CD4-positive, alpha-beta T cell (primary cell): ENCODE measurements at regions of chr9 and their contacts with region 1.

Region 1: GRCh38 chr9:29793970-29794369 is 2220.7 kb upstream of the C9orf72 start:
- DNase-seq: no peak
- ATAC-seq: no peak
- H3K4me3 ChIP-seq: no peak overlapping the region
- H3K4me3 Mint-ChIP-seq: no peak overlapping the region
- H3K27ac ChIP-seq: no peak overlapping the region
- H3K27ac Mint-ChIP-seq: no peak overlapping the region
- H3K4me1 ChIP-seq: no peaks in the 10 kb centered on the region
- H3K4me1 Mint-ChIP-seq: no peaks in the 10 kb centered on the region
- H3K27me3 ChIP-seq: no peaks in the 10 kb centered on the region
- H3K27me3 Mint-ChIP-seq: no peaks in the 10 kb centered on the region
- CTCF ChIP-seq: no peak

Region 2: GRCh38 chr9:29730163-29730562 is 63.8 kb before region 1 on chr9:
- CTCF ChIA-PET with region 1: no interaction called
- POLR2A ChIA-PET with region 1: no interaction called
- intact Hi-C with region 1: loop called in 1 of 2 experiments (anchors 10 kb)
- DNase-seq: no peak
- ATAC-seq: no peak
- H3K4me3 ChIP-seq: no peak overlapping the region
- H3K4me3 Mint-ChIP-seq: no peak overlapping the region
- H3K27ac ChIP-seq: no peak overlapping the region
- H3K27ac Mint-ChIP-seq: no peak overlapping the region
- H3K4me1 ChIP-seq: no peaks in the 10 kb centered on the region
- H3K4me1 Mint-ChIP-seq: no peaks in the 10 kb centered on the region
- H3K27me3 ChIP-seq: no peaks in the 10 kb centered on the region
- H3K27me3 Mint-ChIP-seq: no peaks in the 10 kb centered on the region
- CTCF ChIP-seq: no peak

Region 3: DNA sequence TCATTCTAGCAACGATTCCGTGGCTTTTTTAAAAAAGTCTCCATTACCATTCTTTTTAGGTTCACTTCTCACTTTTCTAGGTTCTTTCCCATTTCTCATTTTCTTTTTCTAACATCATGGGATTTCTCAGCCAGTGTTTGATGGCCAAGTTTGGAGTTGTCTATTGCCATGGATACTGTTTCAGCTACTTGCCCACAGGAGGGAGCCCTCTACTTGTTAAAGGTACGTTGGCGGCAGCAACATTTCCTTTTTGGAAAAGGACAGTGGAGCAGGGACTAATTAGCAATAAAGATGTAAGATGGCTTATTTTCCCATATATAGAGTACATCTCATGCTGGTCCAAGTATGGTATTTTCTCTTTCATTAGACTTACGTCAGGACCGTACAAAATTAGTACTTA is 36.9 kb after region 1 on chr9:
- CTCF ChIA-PET with region 1: no interaction called
- POLR2A ChIA-PET with region 1: no interaction called
- intact Hi-C with region 1: no loop called
- DNase-seq: no peak
- ATAC-seq: no peak
- H3K4me3 ChIP-seq: no peak overlapping the region
- H3K4me3 Mint-ChIP-seq: no peak overlapping the region
- H3K27ac ChIP-seq: no peak overlapping the region
- H3K27ac Mint-ChIP-seq: no peak overlapping the region
- H3K4me1 ChIP-seq: no peaks in the 10 kb centered on the region
- H3K4me1 Mint-ChIP-seq: no peaks in the 10 kb centered on the region
- H3K27me3 ChIP-seq: no peaks in the 10 kb centered on the region
- H3K27me3 Mint-ChIP-seq: no peaks in the 10 kb centered on the region
- CTCF ChIP-seq: no peak